HepG2 (cell line): ENCODE measurements at regions of chr3 and their contacts with region 1.

Region 1: GRCh38 chr3:146772211-146772743 is 167.1 kb upstream of the PLSCR5 start:
- DNase-seq: no peak
- ATAC-seq: no peak
- H3K4me3 ChIP-seq: no peak overlapping the region
- H3K27ac ChIP-seq: no peak overlapping the region
- H3K4me1 ChIP-seq: no peaks in the 10 kb centered on the region
- H3K27me3 ChIP-seq: no peaks in the 10 kb centered on the region; a peak in 1 of 5 replicates
- CTCF ChIP-seq: no peak
- EP300 ChIP-seq: no peak
- POLR2A ChIP-seq: no peak
- RAD21 ChIP-seq: no peak

Region 2: GRCh38 chr3:146019508-146019907 is 752.8 kb before region 1 on chr3:
- CTCF ChIA-PET with region 1: no interaction called
- POLR2A ChIA-PET with region 1: no interaction called
- in situ Hi-C with region 1: no loop called
- intact Hi-C with region 1: no loop called
- DNase-seq: no peak
- ATAC-seq: no peak
- H3K4me3 ChIP-seq: no peak overlapping the region
- H3K27ac ChIP-seq: no peak overlapping the region
- H3K4me1 ChIP-seq: no peaks in the 10 kb centered on the region
- H3K27me3 ChIP-seq: no peaks in the 10 kb centered on the region
- CTCF ChIP-seq: no peak
- EP300 ChIP-seq: no peak
- POLR2A ChIP-seq: no peak
- RAD21 ChIP-seq: no peak

Region 3: DNA sequence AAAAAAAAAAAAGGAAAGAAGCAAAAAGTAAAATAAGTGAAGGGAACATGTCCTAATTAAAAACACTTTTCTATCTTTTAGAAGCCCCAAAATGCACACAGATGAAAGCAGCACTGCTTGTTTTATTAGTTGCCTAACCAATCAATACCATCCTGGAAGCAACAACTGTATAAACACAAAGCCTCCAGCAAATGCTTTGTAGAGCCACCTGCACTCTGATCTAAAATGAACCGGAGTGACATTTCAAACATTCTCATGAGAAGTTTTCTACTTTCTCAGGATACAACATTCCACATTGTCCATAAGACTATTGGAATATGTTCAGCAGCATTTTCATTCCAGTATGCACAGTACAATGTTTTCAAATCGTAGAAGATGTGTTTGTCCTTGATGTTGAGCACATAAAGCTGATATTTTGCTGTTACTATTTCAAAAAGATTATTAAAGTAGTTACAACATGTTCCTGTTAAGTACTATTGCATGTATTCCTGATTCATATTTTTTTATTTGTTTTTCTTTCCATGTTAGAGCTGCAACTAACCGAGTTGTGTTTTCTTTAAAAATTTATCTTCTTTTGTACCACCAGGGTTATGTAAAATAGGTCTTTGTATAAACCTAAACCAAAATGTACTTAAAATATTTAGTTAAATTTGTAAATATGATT is 116.8 kb before region 1 on chr3:
- CTCF ChIA-PET with region 1: no interaction called
- POLR2A ChIA-PET with region 1: no interaction called
- in situ Hi-C with region 1: no loop called
- intact Hi-C with region 1: loop called (anchors 5 kb)
- DNase-seq: peak; percentile 59
- ATAC-seq: peak; percentile 97
- H3K4me3 ChIP-seq: no peak overlapping the region; a peak in 1 of 6 replicates
- H3K27ac ChIP-seq: peak overlapping the region; percentile 51
- H3K4me1 ChIP-seq: peaks cover 16% of the 10 kb centered on the region
- H3K27me3 ChIP-seq: no peaks in the 10 kb centered on the region; a peak in 1 of 5 replicates
- CTCF ChIP-seq: no peak
- EP300 ChIP-seq: peak in 1 of 2 experiments; percentile 92; a peak in 2 of 4 replicates
- POLR2A ChIP-seq: no peak
- RAD21 ChIP-seq: no peak